Activated T-helper 1 cell treated with anti-CD3 and anti-CD28 coated beads, Interleukin-12 subunit alpha, Interleukin-12 subunit beta, Interleukin-2, Interleukin-4 antibody, amounts not matched to agents 30 ng/mL and 10 ng/mL and 1 ng/mL, durations not matched to agents 14 hours and 24 hours and 36 hours (primary cell): ENCODE measurements at regions of chr13 and their contacts with region 1.

Region 1: DNA sequence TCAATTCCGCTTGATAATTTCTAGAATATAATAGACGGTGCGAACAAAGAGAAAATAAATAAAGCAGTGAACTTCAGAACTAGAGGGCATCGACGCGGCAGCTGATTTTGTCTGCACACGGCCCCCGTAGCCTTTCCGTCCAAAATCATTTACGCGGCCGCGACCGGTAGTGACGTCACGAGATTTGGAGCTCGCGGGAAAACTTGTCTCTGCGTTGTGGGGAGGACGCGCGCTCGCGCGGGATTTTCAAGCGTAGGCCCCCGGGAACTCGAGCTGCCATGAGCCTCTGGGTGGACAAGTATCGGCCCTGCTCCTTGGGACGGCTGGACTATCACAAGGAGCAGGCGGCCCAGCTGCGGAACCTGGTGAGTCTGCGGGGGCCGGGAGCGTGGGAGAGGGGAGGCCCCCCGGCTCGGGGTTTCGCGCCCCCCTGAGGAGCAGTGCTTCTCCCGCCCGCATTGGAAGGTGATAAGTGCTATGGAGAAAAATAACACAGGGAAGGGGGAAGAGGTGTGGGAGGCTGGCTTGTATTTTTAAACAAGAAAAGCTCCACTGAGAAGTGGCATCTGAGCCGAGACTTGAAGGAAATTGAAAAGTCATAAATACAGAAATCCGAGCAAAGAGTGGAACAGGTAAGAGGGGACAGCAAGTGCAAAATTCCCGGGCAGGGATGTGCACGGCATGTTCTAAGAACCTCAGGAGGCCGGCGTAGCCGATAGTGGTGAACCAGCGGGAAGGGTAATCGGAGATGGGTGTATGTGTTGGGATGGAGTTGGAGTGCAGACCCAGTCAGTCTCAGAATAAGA is at the start of gene RFC3:
- DNase-seq: peak; percentile 90
- H3K4me3 Mint-ChIP-seq: peak within 1 kb of the TSS; percentile 97
- H3K27ac Mint-ChIP-seq: peak within 1 kb of the TSS; percentile 90
- H3K4me1 Mint-ChIP-seq: peaks cover 46% of the 10 kb centered on the region
- H3K27me3 Mint-ChIP-seq: peaks cover 8% of the 10 kb centered on the region
- total RNA-seq, gene RFC3: 74.7 and 78.0 TPM in 2 replicates

Region 2: DNA sequence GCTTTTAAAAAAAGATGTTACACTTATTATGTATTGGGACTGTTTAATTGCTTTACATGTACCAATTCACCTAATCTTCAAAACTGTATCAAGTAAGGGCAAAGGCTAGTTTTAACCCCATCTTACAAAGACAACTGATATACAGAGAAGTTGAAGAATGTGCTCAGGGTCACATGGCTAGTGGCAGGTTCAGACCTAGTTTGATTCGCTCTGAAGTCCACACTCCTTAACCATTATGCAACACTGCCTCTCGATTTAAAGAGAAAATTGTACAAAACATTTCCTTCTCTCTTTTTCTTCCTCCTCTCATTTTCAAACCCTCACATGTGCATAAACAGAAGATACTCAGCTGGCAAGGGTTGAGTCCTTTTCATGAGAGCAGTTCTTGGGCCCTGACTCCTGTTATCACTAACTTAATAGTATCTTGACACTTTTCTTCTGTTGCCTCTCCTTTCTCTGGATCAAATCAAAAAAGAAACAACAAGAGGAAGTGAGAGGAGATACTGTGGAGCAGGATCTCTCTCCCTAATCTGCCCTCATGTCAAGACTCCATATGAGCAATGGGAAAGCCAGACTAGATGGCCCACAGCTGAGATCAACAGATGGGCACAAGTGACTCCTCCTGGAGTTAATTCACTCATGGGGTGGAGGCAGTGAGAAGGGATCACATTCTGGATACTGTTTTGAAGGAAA is 1371.2 kb before region 1 on chr13:
- intact Hi-C with region 1: no loop called
- DNase-seq: no peak
- H3K4me3 Mint-ChIP-seq: no peak overlapping the region
- H3K27ac Mint-ChIP-seq: no peak overlapping the region
- H3K4me1 Mint-ChIP-seq: peaks cover 26% of the 10 kb centered on the region
- H3K27me3 Mint-ChIP-seq: no peaks in the 10 kb centered on the region

Region 3: GRCh38 chr13:33480561-33480960 is 337.5 kb before region 1 on chr13:
- intact Hi-C with region 1: no loop called
- DNase-seq: no peak
- H3K4me3 Mint-ChIP-seq: no peak overlapping the region
- H3K27ac Mint-ChIP-seq: no peak overlapping the region
- H3K4me1 Mint-ChIP-seq: no peaks in the 10 kb centered on the region
- H3K27me3 Mint-ChIP-seq: peaks cover 3% of the 10 kb centered on the region

Region 4: GRCh38 chr13:33678906-33679657 is 139.0 kb before region 1 on chr13:
- intact Hi-C with region 1: loop called (anchors 1 kb)
- DNase-seq: peak; percentile 71
- H3K4me3 Mint-ChIP-seq: peak overlapping the region; percentile 73
- H3K27ac Mint-ChIP-seq: peak overlapping the region; percentile 91
- H3K4me1 Mint-ChIP-seq: peaks cover 36% of the 10 kb centered on the region
- H3K27me3 Mint-ChIP-seq: peaks cover 2% of the 10 kb centered on the region

Region 5: GRCh38 chr13:33789066-33789606 is 29.0 kb before region 1 on chr13:
- intact Hi-C with region 1: loop called (anchors 2 kb)
- DNase-seq: no peak
- H3K4me3 Mint-ChIP-seq: no peak overlapping the region
- H3K27ac Mint-ChIP-seq: no peak overlapping the region
- H3K4me1 Mint-ChIP-seq: peaks cover 18% of the 10 kb centered on the region
- H3K27me3 Mint-ChIP-seq: peaks cover 2% of the 10 kb centered on the region

Region 6: DNA sequence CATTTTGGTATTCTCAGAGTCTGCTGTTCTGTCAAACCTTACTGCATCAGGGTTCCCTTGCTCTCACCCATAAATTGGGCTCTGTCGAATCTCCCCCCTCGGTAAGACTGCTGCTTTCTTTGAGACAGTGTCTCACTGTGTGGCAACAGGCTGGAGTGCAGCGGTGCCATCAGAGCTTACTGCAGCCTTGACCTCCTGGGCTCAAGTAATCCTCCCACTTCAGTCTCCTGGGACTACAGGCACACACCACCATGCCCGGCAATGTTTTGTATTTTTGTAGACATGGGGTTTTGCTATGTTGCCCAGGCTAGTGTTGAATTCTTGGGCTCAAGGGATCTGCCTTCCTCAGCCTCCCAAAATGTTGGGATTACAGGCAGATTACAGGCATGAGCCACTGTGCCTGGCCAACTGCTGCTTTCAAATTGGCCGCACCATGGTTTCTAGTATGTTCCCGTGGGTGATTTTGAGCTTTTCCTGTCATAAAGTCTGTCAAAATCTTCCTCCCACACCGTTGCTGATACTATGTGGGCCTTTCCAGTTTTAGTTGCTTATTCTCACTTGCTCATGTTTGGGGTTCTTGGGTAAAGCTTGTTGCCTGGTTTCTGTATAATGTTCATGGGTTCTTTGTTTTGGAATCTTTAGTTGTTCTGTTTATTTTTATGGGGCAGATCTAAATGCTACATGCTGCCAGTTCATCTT is 10.5 kb after region 1 on chr13:
- intact Hi-C with region 1: loop called (anchors 2 kb)
- DNase-seq: no peak
- H3K4me3 Mint-ChIP-seq: no peak overlapping the region
- H3K27ac Mint-ChIP-seq: peak overlapping the region; percentile 80
- H3K4me1 Mint-ChIP-seq: peaks cover 31% of the 10 kb centered on the region
- H3K27me3 Mint-ChIP-seq: no peaks in the 10 kb centered on the region